ENCODE measurements at regions of chr15 and their contacts with region 1.

Region 1: DNA sequence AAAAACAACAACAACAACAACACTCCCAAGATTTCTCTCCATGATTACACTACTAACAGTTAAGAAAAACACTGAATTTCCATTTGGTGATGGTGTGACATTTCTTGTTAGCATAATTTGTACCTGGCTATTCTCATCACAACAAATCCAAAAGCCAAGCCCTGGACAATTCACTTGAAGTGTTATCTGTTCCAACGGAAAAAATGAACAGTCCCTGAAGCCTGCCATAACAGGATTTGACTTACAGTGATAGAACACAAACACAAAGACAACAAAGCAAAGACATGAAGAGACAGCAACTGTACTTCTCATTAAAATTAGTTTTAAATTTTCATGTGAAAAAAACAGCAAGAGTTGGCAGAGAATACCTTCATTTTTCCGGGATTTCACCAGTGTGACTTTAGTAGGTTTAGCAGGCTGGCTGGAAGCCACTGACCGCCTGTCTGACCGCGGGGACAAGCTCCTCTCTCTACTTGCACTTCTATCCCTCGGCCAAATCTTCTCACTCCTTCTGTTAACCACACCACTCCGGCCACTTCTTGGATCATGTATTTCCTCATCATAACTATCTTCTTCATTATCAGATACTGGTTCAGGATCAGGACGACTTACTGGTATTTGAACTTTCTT is 56.3 kb downstream of the TJP1 start:
- DNase-seq: no peak
- H3K4me3 ChIP-seq: no peak overlapping the region
- H3K27ac ChIP-seq: no peak overlapping the region
- H3K4me1 ChIP-seq: peaks cover 0 to 6% of the 10 kb centered on the region in 2 donors
- H3K27me3 ChIP-seq: no peaks in the 10 kb centered on the region
- CTCF ChIP-seq: no peak
- POLR2A ChIP-seq: no peak

Region 2: DNA sequence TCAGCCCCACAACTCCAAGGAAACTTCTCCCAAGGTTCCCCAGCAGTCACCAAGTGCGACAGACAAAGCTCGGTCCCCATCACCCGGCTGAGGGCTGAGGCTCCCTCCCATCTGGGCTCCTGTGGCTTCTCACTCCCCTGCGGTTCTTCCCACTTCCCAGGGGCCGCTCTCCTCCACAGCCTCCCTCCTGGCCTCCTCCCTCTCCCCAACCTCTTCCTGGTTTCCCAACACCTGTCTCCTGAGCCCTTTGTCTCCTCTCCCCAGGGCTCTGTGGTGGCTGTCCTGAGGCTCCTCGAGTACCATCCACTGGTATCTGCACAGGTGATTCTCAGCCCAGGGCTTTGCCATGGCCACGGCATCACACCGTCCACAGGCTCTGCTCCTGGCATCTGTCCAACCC is 383.2 kb before region 1 on chr15:
- intact Hi-C with region 1: loop called (anchors 10 kb)
- DNase-seq: no peak
- H3K4me3 ChIP-seq: no peak overlapping the region
- H3K27ac ChIP-seq: no peak overlapping the region
- H3K4me1 ChIP-seq: no peaks in the 10 kb centered on the region
- H3K27me3 ChIP-seq: no peaks in the 10 kb centered on the region
- CTCF ChIP-seq: no peak
- POLR2A ChIP-seq: no peak